ENCODE measurements at regions of chr12 and their contacts with region 1.

Region 1: GRCh38 chr12:9797722-9798619 is 29.3 kb upstream of the KLRF1 start:
- DNase-seq: peak; percentile 40 to 91 (median 56)
- ATAC-seq: peak; percentile 95
- H3K4me3 ChIP-seq: no peak overlapping the region
- H3K4me3 Mint-ChIP-seq: peak overlapping the region; percentile 52
- H3K27ac ChIP-seq: peak overlapping the region in 1 of 2 donors; percentile 42
- H3K27ac Mint-ChIP-seq: peak overlapping the region; percentile 5
- H3K4me1 ChIP-seq: peaks cover 19% of the 10 kb centered on the region
- H3K4me1 Mint-ChIP-seq: peaks cover 51% of the 10 kb centered on the region
- H3K27me3 ChIP-seq: no peaks in the 10 kb centered on the region
- H3K27me3 Mint-ChIP-seq: no peaks in the 10 kb centered on the region
- CTCF ChIP-seq: peak; percentile 91

Region 2: GRCh38 chr12:9779209-9779608 is 18.8 kb before region 1 on chr12:
- CTCF ChIA-PET with region 1: interaction called, 3 read pairs
- POLR2A ChIA-PET with region 1: interaction called, 9 read pairs
- intact Hi-C with region 1: loop called in 1 of 2 experiments (anchors 2 kb)
- DNase-seq: no peak
- ATAC-seq: no peak
- H3K4me3 ChIP-seq: no peak overlapping the region
- H3K4me3 Mint-ChIP-seq: no peak overlapping the region
- H3K27ac ChIP-seq: no peak overlapping the region
- H3K27ac Mint-ChIP-seq: no peak overlapping the region
- H3K4me1 ChIP-seq: peaks cover 29% of the 10 kb centered on the region
- H3K4me1 Mint-ChIP-seq: peaks cover 65% of the 10 kb centered on the region
- H3K27me3 ChIP-seq: no peaks in the 10 kb centered on the region
- H3K27me3 Mint-ChIP-seq: no peaks in the 10 kb centered on the region
- CTCF ChIP-seq: no peak

Region 3: DNA sequence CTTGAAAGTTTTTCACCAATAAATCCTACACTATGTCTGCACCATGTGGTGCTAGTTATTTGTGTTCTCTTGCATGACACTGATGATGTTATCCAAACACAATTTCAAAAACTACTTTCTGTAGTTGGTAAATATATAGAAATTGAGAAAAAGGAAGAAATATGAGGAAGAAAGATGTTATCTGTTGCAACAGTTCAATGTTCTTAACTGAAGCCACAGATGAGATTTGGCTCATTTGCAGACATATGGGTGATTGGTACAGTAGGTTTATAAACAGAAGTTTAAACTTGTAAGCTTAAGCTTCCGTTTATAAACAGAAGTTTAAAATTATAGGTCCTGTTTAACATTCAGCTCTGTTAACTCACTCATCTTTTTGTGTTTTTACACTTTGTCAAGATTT is 173.2 kb after region 1 on chr12 and contains the start of gene CLEC12A:
- CTCF ChIA-PET with region 1: no interaction called
- POLR2A ChIA-PET with region 1: no interaction called
- intact Hi-C with region 1: no loop called
- DNase-seq: no peak
- ATAC-seq: no peak
- H3K4me3 ChIP-seq: peak within 1 kb of the TSS; percentile 8
- H3K4me3 Mint-ChIP-seq: no peak within 1 kb of the TSS
- H3K27ac ChIP-seq: no peak within 1 kb of the TSS
- H3K27ac Mint-ChIP-seq: no peak within 1 kb of the TSS
- H3K4me1 ChIP-seq: no peaks in the 10 kb centered on the region
- H3K4me1 Mint-ChIP-seq: no peaks in the 10 kb centered on the region
- H3K27me3 ChIP-seq: no peaks in the 10 kb centered on the region
- H3K27me3 Mint-ChIP-seq: peaks cover 7% of the 10 kb centered on the region
- CTCF ChIP-seq: no peak
- total RNA-seq, gene CLEC12A: 0.22 to 0.42 TPM